ENCODE measurements at regions of chr12 and their contacts with region 1.

Region 1: DNA sequence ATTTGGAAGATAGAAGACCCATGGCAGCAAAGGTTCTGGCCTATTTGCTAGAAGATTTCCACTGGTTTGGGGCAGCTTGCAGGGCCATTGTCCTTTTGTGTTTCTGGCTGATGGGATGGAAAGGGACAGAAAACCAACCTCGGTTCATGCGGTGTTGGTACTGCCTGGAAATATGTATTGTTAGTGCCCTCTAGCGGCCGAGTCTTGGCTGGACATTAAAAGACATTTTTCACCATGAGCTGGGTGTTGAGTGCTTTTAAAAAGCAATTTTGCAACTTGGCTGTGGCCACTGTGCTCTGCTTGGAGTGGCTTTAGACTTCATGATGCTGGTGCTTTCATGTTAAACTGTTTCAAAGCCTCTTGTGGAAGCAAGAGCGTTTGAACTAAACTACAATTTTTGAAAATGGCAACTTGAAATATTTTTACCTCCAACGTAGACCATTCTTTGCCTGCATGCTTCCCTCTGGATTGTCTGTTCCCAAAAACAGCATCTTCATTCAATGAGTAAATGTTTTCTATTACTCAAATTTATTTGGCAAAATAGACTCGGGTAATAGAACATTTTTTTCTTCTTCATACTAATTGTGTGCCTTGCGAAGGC is 102.7 kb upstream of the TBX5 start:
- DNase-seq: peak; percentile 9 to 60 (median 48)
- ATAC-seq: peak; percentile 61
- H3K4me3 ChIP-seq: no peak overlapping the region
- H3K4me3 Mint-ChIP-seq: no peak overlapping the region
- H3K27ac ChIP-seq: no peak overlapping the region
- H3K27ac Mint-ChIP-seq: no peak overlapping the region
- H3K4me1 ChIP-seq: no peaks in the 10 kb centered on the region
- H3K4me1 Mint-ChIP-seq: peaks cover 0 to 3% (median 0%) of the 10 kb centered on the region in 7 donors
- H3K27me3 ChIP-seq: no peaks in the 10 kb centered on the region
- H3K27me3 Mint-ChIP-seq: peaks cover 7 to 26% (median 17%) of the 10 kb centered on the region in 5 donors

Region 2: DNA sequence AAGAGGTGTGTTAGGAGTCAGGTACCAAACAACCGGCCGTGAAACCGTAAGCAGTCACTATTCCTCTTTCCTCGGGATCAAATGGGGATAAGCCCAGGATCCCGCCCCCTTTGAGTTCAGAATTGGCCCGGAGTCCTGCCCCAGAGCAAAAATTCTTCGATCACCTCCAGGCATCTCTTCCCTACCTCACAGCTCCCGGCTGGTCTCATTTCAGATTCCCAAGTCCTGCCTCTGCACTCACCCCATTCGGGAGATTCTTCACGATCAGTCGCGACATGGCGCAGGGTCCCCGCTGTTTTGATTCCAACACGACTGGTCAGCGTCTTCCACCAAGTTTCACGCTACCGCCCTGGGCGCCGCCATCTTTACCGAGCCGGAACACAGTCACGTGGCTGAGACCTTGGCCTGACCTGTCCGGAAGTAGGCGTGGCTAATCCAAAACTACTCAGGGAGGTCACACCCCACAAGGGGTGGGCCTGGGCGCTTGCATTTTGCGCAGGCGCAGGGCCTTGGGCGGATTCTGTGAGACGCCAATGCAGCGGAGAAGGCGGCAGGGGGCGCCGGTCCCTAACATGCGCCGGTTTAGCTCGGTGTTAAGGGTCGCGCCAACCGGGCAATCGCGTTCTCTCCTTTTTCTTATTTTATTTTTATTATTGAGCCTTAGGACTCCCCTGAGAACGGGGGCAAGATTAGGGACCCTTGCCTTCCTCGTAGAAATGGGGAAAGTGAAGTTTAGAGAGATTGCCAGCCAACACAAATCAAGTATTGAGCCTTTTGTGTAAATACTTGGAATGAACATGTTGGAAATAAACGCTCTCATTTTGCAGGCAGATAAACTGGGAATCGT is 542.5 kb before region 1 on chr12 and contains the start of gene RBM19:
- CTCF ChIA-PET with region 1: interaction called, 16 read pairs
- POLR2A ChIA-PET with region 1: no interaction called
- intact Hi-C with region 1: loop called (anchors 1 to 5 kb)
- DNase-seq: peak; percentile 94 to 98 (median 96)
- ATAC-seq: peak; percentile 99
- H3K4me3 ChIP-seq: peak within 1 kb of the TSS; percentile 88
- H3K4me3 Mint-ChIP-seq: peak within 1 kb of the TSS; percentile 94 to 100 (median 98)
- H3K27ac ChIP-seq: peak within 1 kb of the TSS; percentile 54
- H3K27ac Mint-ChIP-seq: peak within 1 kb of the TSS; percentile 92 to 98 (median 95)
- H3K4me1 ChIP-seq: peaks cover 5% of the 10 kb centered on the region in 2 donors
- H3K4me1 Mint-ChIP-seq: peaks cover 38 to 72% (median 53%) of the 10 kb centered on the region in 7 donors
- H3K27me3 ChIP-seq: no peaks in the 10 kb centered on the region
- H3K27me3 Mint-ChIP-seq: peaks cover 0 to 9% (median 0%) of the 10 kb centered on the region in 5 donors
- total RNA-seq, gene RBM19: 45.8 to 108 (median 67.3) TPM

Region 3: DNA sequence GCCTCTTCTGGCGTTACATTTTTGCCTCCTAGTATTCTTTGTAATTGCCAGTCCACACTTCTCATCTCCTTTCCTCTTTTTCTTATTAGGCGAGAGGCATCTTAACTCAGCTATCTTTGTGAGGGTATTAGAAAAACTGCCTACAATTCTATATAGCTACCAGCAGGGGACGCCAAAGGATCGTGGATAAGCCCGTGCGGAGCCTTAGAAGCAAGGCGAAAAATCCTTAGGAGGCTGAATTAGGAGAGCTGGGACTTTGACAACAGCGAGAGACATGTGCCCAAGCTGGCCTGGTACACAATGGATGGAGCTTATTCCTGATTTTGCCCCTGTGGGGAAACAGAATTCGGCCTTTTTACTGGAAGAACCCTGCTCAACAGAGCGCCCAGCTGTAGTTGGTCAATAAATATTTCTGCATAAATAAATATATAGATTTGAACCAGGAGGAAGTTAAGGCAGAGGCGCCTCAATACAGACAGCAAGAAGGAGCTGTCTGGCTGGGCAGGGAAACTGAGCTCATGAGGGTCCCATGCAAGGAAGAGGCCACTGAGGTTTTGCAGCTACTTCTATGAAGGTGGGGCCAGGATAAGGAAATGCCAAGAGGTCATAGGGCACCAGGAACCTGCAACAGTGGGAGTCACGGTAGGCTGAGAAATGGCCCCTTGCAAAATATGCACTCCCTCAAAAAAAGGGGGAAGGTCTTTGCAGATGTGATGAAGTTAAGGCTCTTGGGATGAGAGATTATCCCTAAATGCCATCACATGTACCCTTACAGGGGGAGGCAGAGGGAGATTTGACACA is 527.9 kb before region 1 on chr12:
- CTCF ChIA-PET with region 1: interaction called, 3 read pairs
- POLR2A ChIA-PET with region 1: no interaction called
- intact Hi-C with region 1: loop called in 1 of 2 experiments (anchors 1 kb)
- DNase-seq: peak in 2 of 9 donors; percentile 18 to 38
- ATAC-seq: peak; percentile 67
- H3K4me3 ChIP-seq: no peak overlapping the region
- H3K4me3 Mint-ChIP-seq: no peak overlapping the region
- H3K27ac ChIP-seq: no peak overlapping the region
- H3K27ac Mint-ChIP-seq: no peak overlapping the region
- H3K4me1 ChIP-seq: no peaks in the 10 kb centered on the region
- H3K4me1 Mint-ChIP-seq: peaks cover 0 to 4% (median 0%) of the 10 kb centered on the region in 7 donors
- H3K27me3 ChIP-seq: peaks cover 0 to 5% of the 10 kb centered on the region in 2 donors
- H3K27me3 Mint-ChIP-seq: peaks cover 4 to 55% (median 36%) of the 10 kb centered on the region in 5 donors